ENCODE measurements at regions of chr18 and their contacts with region 1.

Region 1: DNA sequence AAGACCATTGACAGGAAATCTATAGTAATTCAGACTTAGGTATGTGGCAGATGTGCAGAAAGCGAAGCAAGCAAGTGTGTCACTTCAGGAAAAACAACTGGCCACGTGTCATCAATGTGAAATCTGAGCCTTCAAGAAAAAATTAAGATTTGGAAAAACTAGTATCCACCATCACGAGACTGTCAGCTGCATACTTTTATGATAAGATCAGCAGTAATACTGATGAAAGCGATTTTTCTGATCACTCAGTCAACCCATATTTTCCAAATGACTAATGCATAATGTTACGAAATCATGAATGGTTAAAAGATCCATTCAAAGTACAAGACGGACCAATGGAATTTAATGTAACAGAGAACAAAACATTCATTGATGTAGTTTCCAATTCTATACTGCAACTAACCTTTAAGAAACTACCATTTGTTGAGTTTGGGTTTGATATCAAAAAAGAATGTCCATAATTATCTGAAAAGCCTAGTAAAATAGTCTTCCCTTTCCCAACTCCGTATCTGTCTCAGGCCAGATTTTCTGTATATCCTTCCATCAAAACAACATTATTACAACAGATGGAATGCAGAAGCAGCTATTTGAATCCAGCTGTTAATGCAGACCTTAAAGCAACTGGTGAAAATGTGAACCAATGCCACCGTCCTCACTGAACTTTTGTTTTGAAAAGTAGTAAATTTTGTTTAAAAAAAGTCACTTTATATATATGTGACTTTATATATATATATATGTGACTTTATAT is 17.0 kb upstream of the BCL2 start:
- DNase-seq: peak; percentile 96
- ATAC-seq: peak; percentile 83
- H3K4me3 ChIP-seq: no peak overlapping the region
- H3K27ac ChIP-seq: peak overlapping the region; percentile 96
- H3K4me1 ChIP-seq: peaks cover 6% of the 10 kb centered on the region
- H3K27me3 ChIP-seq: no peaks in the 10 kb centered on the region
- CTCF ChIP-seq: no peak
- POLR2A ChIP-seq: no peak
- RAD21 ChIP-seq: no peak

Region 2: DNA sequence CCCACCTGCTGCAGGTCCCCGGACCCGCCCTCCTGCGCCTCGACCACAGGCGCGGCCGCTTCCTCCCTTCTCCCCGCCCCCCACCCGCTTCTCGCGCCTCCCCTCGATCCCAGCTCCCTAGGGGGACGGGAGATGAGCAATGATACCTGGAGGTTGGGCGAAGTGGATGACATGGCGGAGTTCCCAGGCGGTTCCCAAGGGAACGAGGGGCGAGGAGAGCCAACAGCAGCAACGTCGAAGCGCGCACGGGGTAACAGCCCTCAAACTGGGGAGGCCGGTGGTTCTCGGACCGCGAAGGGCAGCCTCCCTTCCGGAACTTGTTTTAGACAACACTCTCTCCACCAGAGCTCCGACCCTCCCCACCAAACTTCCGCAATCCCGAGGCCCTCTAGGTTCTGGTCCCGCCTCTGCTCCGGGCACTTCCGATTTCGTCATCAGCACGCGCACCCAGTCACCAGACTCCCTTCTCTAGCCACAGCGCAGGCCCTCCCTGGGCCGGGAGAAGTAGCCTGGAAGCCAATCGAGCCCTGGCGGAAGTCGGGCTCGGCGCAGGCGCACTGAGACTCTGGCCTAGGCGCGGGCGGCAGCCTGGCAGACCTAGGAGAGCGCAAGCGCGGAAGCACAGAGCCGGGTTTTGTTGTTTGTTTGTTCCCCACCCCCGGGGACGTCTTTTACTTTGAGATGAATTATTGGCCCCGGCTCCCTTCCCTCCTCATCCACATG is 85.7 kb after region 1 on chr18 and contains the start of gene VPS4B:
- CTCF ChIA-PET with region 1: no interaction called
- POLR2A ChIA-PET with region 1: no interaction called
- dilution Hi-C with region 1: no loop called
- in situ Hi-C with region 1: no loop called
- intact Hi-C with region 1: loop called (anchors 1 kb)
- DNase-seq: peak; percentile 99
- ATAC-seq: peak; percentile 98
- H3K4me3 ChIP-seq: peak within 1 kb of the TSS; percentile 78
- H3K27ac ChIP-seq: peak within 1 kb of the TSS; percentile 90
- H3K4me1 ChIP-seq: no peaks in the 10 kb centered on the region
- H3K27me3 ChIP-seq: no peaks in the 10 kb centered on the region
- CTCF ChIP-seq: no peak
- POLR2A ChIP-seq: peak; percentile 93
- RAD21 ChIP-seq: no peak
- total RNA-seq, gene VPS4B: 31.5 and 41.1 TPM in 2 replicates

Region 3: GRCh38 chr18:63539904-63540510 is 203.5 kb after region 1 on chr18:
- CTCF ChIA-PET with region 1: no interaction called
- POLR2A ChIA-PET with region 1: no interaction called
- dilution Hi-C with region 1: no loop called
- in situ Hi-C with region 1: no loop called
- intact Hi-C with region 1: no loop called
- DNase-seq: peak; percentile 46
- ATAC-seq: peak; percentile 87
- H3K4me3 ChIP-seq: no peak overlapping the region
- H3K27ac ChIP-seq: no peak overlapping the region
- H3K4me1 ChIP-seq: no peaks in the 10 kb centered on the region
- H3K27me3 ChIP-seq: no peaks in the 10 kb centered on the region; the same call in 1 of the 2 replicates
- CTCF ChIP-seq: no peak
- POLR2A ChIP-seq: no peak
- RAD21 ChIP-seq: no peak

Measured in IMR-90 (cell line).